Posterior cingulate gyrus (tissue), 11 donors: ENCODE measurements at regions of chr3 and their contacts with region 1.

Region 1: DNA sequence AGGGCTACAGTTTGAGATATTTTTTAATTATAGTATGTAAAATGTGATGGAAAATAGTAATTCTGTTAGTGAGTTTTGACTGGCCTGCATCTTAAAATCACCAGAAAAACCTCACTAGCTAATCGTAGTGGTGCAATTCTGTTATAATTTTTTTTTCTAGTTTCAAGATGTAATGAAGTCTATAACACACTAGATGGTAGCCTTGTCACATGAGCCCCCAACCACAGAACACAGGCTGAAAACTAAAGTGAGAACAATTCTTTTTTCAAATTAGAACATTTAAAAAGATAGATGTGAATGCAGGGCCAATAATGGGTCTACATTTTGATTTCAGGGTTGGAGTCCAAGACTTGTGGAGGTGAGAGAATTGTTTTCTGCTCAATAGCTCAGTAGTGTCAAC is 83.3 kb upstream of the KCNH8 start:
- DNase-seq: no peak

Region 2: DNA sequence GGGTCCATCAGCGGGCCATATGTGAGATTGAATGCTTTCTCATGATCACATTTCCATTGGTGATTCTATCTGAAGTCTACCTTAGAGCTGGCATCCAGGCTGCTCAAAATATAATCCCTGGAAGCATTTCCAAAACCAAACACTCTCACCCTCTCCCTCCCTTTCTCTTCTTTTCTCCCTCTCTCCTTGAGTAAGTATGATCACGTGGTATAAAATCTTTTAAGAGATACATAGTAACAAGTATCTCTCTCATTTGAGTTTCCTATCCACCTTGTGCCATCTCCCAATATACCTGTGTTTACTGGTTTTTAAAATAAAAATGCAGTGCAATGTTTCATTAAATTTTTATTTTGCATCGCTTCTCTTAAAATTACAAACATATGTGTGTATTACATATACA is 267.7 kb before region 1 on chr3:
- intact Hi-C with region 1: no loop called
- DNase-seq: no peak

Region 3: GRCh38 chr3:19213601-19214220 is 148.7 kb after region 1 on chr3:
- intact Hi-C with region 1: loop called (anchors 5 kb)
- DNase-seq: peak in 3 of 10 donors; percentile 18 to 83 (median 38)

Region 4: DNA sequence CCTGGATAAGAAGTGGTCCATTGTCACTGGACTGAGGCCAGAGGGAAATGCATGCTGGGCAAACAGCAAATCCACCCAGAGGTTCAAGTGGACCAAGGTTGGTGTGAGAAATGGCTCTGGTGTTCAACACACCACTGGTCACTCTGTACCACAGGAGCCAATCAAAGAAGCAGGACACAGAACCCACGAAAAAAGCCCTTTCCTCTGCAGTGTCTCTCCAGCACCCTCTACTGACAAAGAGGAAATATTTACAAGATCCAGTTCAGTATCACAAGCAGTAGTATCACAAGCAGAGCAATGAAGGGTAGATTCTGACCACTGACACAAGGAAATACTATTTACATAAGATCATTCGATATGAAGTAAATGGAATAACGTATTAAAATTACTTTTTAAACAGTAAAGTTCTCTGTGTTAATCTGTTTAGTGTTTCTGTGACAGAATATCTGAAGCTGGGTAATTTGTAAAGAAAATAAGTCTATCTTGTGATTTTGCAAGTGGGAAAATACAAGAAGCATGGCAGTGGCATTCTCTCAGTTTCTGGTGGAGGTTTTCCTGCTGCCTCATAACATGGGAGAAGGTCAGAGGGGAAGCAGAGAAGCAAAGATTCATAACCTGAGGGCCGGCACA is 478.3 kb after region 1 on chr3:
- intact Hi-C with region 1: loop called (anchors 2 kb)
- DNase-seq: peak in 1 of 10 donors; percentile 12

Region 5: DNA sequence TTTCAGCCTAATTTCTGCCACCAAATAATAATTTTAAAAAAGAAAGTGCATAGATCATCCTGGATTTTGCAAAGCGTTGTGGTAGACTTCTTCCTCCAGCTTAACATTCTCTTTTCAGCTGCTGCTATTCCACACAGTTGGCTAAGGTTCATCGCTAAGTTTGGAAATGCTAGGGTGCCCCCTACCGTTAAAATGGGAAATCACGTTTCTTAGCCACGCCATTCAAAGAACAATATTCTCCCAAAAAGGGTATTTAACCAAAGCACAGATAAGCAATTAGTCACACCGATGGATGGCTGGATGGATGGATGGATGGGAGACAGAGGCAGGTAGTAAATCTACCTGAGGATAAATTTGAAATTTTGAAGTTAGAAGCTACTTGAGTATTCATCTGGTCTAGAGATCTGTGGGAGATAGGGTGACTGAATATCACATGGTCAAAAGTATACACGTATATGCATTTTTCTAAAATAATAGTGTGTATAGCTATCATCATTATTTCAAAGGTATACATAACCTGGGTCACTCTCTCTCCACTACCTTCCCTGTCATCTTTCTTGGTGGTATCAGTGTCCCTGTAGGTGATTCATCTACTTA is 801.8 kb after region 1 on chr3:
- intact Hi-C with region 1: loop called (anchors 2 kb)
- DNase-seq: peak in 5 of 10 donors; percentile 41 to 84 (median 47)